IMR-90 (cell line): ENCODE measurements at regions of chr9 and their contacts with region 1.

Region 1: GRCh38 chr9:99947396-99947795 is 40.9 kb downstream of the STX17 start:
- DNase-seq: no peak
- ATAC-seq: no peak
- H3K4me3 ChIP-seq: no peak overlapping the region
- H3K27ac ChIP-seq: no peak overlapping the region
- H3K4me1 ChIP-seq: 0 out of 2 replicates have a peak, but pooled peaks cover 1% of the 10 kb centered on the region
- H3K27me3 ChIP-seq: no peaks in the 10 kb centered on the region
- CTCF ChIP-seq: no peak
- POLR2A ChIP-seq: no peak
- RAD21 ChIP-seq: no peak

Region 2: GRCh38 chr9:99634186-99634585 is 313.2 kb before region 1 on chr9:
- CTCF ChIA-PET with region 1: no interaction called
- POLR2A ChIA-PET with region 1: no interaction called
- dilution Hi-C with region 1: no loop called
- in situ Hi-C with region 1: no loop called
- intact Hi-C with region 1: no loop called
- DNase-seq: no peak
- ATAC-seq: no peak
- H3K4me3 ChIP-seq: no peak overlapping the region
- H3K27ac ChIP-seq: no peak overlapping the region
- H3K4me1 ChIP-seq: no peaks in the 10 kb centered on the region
- H3K27me3 ChIP-seq: peaks cover 2% of the 10 kb centered on the region; the same call in 1 of the 2 replicates
- CTCF ChIP-seq: no peak
- POLR2A ChIP-seq: no peak
- RAD21 ChIP-seq: no peak

Region 3: DNA sequence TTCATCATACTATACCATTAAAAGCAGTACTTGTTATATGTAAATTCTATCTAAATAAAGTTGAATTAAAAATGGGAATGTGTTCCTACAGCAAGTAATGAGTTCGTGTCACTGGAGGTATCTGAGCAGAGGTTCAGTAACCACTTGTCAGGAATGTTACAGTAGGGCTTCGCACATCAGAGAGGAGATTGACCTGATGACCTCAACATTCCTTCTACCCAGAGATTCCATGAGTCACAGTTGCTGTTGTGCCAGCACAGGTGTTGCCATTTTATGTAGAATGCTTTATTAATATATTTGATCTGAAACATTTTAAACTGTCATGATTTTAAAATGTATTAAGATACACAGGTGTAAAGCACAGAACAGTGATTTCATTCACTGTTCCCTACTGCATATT is 19.3 kb after region 1 on chr9:
- CTCF ChIA-PET with region 1: no interaction called
- POLR2A ChIA-PET with region 1: interaction called, 15 read pairs
- dilution Hi-C with region 1: no loop called
- in situ Hi-C with region 1: no loop called
- intact Hi-C with region 1: no loop called
- DNase-seq: peak; percentile 33
- ATAC-seq: peak; percentile 35; the same call in 1 of the 2 replicates
- H3K4me3 ChIP-seq: no peak overlapping the region
- H3K27ac ChIP-seq: no peak overlapping the region
- H3K4me1 ChIP-seq: no peaks in the 10 kb centered on the region; the same call in 1 of the 2 replicates
- H3K27me3 ChIP-seq: no peaks in the 10 kb centered on the region
- CTCF ChIP-seq: no peak
- POLR2A ChIP-seq: no peak
- RAD21 ChIP-seq: no peak